Psoas muscle (tissue), 8 donors: ENCODE measurements at regions of chr20 and their contacts with region 1.

Region 1: DNA sequence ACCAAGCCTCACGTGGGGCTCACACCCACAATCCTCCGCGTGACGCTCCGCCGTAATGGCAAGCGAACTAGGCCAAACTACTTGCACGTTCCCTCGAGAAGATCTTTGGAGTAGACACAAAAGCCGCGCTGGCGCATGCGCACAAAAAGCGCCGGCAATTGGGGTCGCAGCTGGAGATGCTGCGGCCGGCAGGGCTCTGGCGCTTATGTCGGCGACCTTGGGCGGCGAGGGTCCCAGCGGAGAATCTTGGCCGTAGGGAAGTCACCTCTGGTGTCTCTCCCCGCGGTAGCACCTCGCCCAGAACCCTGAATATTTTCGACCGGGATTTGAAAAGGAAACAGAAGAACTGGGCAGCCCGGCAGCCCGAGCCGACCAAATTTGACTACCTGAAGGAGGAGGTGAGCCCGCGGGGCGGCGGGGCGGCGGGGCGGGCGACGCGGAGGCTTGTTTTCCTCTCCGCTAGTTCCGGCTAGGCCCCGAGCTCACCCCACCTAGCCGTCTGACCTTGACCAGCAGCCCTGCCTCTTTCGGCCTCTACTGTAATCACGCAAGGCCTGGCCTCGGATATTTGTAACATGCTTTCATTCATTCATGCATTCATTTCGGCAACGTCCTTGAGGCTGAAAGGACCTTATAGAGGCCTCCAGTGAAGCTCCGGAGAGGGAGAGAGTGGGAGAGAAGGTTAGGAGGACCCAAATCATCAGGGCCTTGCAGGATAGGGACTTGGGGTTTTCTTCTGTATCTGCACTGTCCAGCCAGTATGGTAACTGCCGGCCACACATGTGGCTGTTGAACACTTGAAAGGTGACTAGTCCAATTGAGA is at the starts of genes ESF1 and NDUFAF5:
- DNase-seq: peak; percentile 94 to 97
- ATAC-seq: peak; percentile 96 to 100 (median 100)
- H3K4me3 ChIP-seq: peak within 1 kb of the TSS; percentile 98
- H3K27ac ChIP-seq: peak within 1 kb of the TSS; percentile 98
- H3K4me1 ChIP-seq: peaks cover 36% of the 10 kb centered on the region
- H3K27me3 ChIP-seq: no peaks in the 10 kb centered on the region
- CTCF ChIP-seq: peak; percentile 3
- total RNA-seq, gene ESF1: 15.1 to 22.8 (median 19.5) TPM
- total RNA-seq, gene NDUFAF5: 28.2 to 49.7 (median 44.2) TPM

Region 2: DNA sequence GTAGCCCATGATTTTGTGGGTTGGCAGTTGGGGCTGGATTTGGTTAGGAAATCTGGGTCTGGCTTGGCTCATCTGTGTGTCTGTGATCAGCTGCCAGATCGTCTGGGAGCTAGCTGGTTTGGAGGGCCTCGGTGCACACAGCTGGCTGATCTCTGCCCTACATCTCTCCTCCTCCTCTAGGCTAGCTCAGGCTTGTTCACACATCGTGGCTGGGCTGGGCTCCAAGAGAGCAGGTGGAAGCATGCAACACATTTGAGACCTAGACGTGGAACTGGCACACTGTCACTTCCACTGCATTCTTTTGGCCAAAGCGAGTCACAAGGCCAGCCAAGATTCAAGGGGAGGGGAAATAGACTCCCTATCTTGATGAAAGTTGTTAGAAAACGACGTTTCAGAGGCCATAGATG is 15.6 kb after region 1 on chr20:
- intact Hi-C with region 1: loop called in 1 of 2 experiments (anchors 1 kb)
- DNase-seq: peak; percentile 93 to 97
- ATAC-seq: peak; percentile 99 to 100 (median 100)
- H3K4me3 ChIP-seq: peak overlapping the region; percentile 38
- H3K27ac ChIP-seq: peak overlapping the region; percentile 84
- H3K4me1 ChIP-seq: peaks cover 18% of the 10 kb centered on the region
- H3K27me3 ChIP-seq: no peaks in the 10 kb centered on the region
- CTCF ChIP-seq: no peak